Caco-2 (cell line): ENCODE measurements at regions of chr1 and their contacts with region 1.

Region 1: GRCh38 chr1:161177112-161177935 is at the start of gene B4GALT3:
- DNase-seq: peak; percentile 87 to 96
- H3K4me3 ChIP-seq: peak within 1 kb of the TSS; percentile 91
- H3K4me3 Mint-ChIP-seq: peak within 1 kb of the TSS; percentile 85
- H3K27ac Mint-ChIP-seq: peak within 1 kb of the TSS; percentile 96
- H3K4me1 ChIP-seq: peaks cover 4% of the 10 kb centered on the region
- H3K4me1 Mint-ChIP-seq: peaks cover 14% of the 10 kb centered on the region
- H3K27me3 ChIP-seq: no peaks in the 10 kb centered on the region
- H3K27me3 Mint-ChIP-seq: no peaks in the 10 kb centered on the region
- CTCF ChIP-seq: peak; percentile 44 to 54
- total RNA-seq, gene B4GALT3: 39.6 and 48.1 TPM in 2 replicates

Region 2: GRCh38 chr1:161098210-161099068 is 78.9 kb before region 1 on chr1 and contains the start of gene KLHDC9:
- CTCF ChIA-PET with region 1: no interaction called
- POLR2A ChIA-PET with region 1: no interaction called
- intact Hi-C with region 1: no loop called
- DNase-seq: peak; percentile 88 to 92
- H3K4me3 ChIP-seq: peak within 1 kb of the TSS; percentile 60
- H3K4me3 Mint-ChIP-seq: peak within 1 kb of the TSS; percentile 70
- H3K27ac Mint-ChIP-seq: peak within 1 kb of the TSS; percentile 82
- H3K4me1 ChIP-seq: no peaks in the 10 kb centered on the region
- H3K4me1 Mint-ChIP-seq: peaks cover 16% of the 10 kb centered on the region
- H3K27me3 ChIP-seq: no peaks in the 10 kb centered on the region
- H3K27me3 Mint-ChIP-seq: no peaks in the 10 kb centered on the region
- CTCF ChIP-seq: peak in 1 of 2 experiments; percentile 26
- total RNA-seq, gene KLHDC9: 2.0 and 2.2 TPM in 2 replicates

Region 3: GRCh38 chr1:161117759-161118581 is 59.4 kb before region 1 on chr1 and contains the starts of genes NIT1 and PFDN2:
- CTCF ChIA-PET with region 1: no interaction called
- POLR2A ChIA-PET with region 1: no interaction called
- intact Hi-C with region 1: loop called (anchors 5 kb)
- DNase-seq: peak; percentile 91 to 92
- H3K4me3 ChIP-seq: peak within 1 kb of the TSS; percentile 91
- H3K4me3 Mint-ChIP-seq: peak within 1 kb of the TSS; percentile 99
- H3K27ac Mint-ChIP-seq: peak within 1 kb of the TSS; percentile 96
- H3K4me1 ChIP-seq: peaks cover 17% of the 10 kb centered on the region
- H3K4me1 Mint-ChIP-seq: peaks cover 13% of the 10 kb centered on the region
- H3K27me3 ChIP-seq: no peaks in the 10 kb centered on the region
- H3K27me3 Mint-ChIP-seq: no peaks in the 10 kb centered on the region
- CTCF ChIP-seq: no peak
- total RNA-seq, gene NIT1: 41.8 and 42.1 TPM in 2 replicates
- total RNA-seq, gene PFDN2: 80.0 and 88.0 TPM in 2 replicates

Region 4: DNA sequence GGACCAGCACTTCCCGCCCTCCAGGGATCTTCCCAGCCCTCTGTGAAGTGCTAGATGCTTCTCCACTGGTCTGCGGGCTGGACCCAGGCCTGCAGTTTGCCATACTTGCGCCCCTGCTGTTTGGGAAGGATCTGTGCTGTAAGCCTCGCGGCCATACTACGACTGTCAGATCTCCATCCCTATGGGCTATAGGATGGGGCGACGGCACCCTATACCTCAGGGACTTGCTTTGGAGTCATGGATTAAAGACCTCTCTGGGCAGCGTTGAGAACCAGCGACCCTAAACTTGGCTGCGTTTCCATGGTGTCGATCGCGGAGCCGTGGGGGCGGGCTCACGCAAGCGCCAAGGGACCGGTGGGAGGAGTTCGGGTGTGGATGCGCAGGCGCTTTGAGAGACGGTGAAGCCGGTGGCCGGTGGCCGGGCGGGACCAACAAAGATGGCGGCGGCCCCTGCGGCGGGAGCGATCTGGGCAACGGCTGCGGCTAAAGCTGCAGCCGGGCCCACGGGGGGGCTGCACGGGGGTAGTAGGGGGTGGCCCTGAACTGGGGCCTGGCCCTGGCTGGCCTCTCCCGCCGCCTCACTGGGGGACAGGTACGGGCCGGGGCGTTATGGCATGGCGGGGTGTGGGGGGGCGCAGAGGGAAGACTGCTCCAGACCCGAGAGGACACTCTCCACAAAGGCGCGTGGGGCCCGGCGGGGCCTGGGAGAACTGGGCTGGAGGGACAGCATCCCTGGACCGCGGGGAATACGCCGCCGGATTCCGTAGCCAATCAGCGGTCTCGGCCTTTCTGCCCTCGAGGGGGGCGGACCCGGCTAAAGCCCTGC is 18.0 kb before region 1 on chr1 and contains the start of gene USP21:
- CTCF ChIA-PET with region 1: no interaction called
- POLR2A ChIA-PET with region 1: interaction called, 14 read pairs
- intact Hi-C with region 1: no loop called
- DNase-seq: peak; percentile 91 to 94
- H3K4me3 ChIP-seq: peak within 1 kb of the TSS; percentile 83
- H3K4me3 Mint-ChIP-seq: peak within 1 kb of the TSS; percentile 82
- H3K27ac Mint-ChIP-seq: peak within 1 kb of the TSS; percentile 81
- H3K4me1 ChIP-seq: peaks cover 10% of the 10 kb centered on the region; the same call in 1 of the 2 replicates
- H3K4me1 Mint-ChIP-seq: peaks cover 12% of the 10 kb centered on the region
- H3K27me3 ChIP-seq: no peaks in the 10 kb centered on the region
- H3K27me3 Mint-ChIP-seq: no peaks in the 10 kb centered on the region
- CTCF ChIP-seq: peak in 1 of 2 experiments; percentile 27
- total RNA-seq, gene USP21: 38.2 and 39.8 TPM in 2 replicates

Region 5: DNA sequence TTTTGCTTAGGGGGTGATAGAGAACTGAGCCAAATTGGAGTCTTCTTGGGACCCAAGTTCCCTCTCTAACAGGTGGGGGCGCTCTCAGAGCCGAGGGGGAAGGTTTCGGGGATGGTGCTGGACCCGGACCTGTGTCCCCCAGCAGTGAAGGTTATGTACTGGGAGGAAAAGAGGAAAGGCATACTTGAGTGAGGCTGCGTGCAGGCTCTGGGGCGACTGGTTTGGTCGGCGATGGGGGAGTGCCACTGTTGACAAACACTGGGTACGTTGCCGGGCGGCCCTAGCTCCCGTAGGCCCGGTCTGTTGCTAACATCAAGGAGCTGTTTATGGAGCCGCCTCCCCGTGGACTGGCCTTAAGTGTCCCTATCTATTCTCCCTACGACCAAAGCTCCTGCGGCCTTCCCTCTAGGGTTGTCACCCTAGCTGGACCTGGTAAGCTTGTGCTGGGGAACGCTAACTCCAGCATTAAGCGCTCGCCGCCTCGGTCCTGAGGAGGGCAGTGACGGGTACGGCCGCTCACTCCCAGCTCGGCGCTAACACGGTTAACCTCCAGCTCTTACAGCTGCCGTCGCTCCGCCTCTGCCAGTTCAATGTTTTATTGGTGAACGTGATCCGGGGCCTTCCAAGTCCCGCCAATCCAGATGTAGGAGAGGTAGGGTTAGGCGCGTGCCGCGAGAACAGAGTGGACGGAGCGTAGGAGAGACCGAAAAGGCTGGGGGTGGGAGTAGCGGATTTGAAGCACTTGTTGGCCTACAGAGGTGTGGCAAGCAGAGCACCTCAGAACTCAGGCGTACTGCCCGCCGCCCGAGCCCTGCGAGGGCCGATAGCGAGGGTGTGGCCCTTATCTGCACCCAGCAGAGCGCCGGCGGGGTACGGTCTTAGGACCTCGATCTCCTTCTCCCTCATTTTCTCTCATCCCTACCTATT is 11.3 kb before region 1 on chr1 and contains the start of gene PPOX:
- CTCF ChIA-PET with region 1: interaction called, 22 read pairs
- POLR2A ChIA-PET with region 1: interaction called, 25 read pairs
- intact Hi-C with region 1: no loop called
- DNase-seq: peak; percentile 96 to 98
- H3K4me3 ChIP-seq: peak within 1 kb of the TSS; percentile 88
- H3K4me3 Mint-ChIP-seq: peak within 1 kb of the TSS; percentile 83
- H3K27ac Mint-ChIP-seq: peak within 1 kb of the TSS; percentile 81
- H3K4me1 ChIP-seq: peaks cover 3% of the 10 kb centered on the region; the same call in 1 of the 2 replicates
- H3K4me1 Mint-ChIP-seq: no peaks in the 10 kb centered on the region
- H3K27me3 ChIP-seq: no peaks in the 10 kb centered on the region
- H3K27me3 Mint-ChIP-seq: no peaks in the 10 kb centered on the region
- CTCF ChIP-seq: peak in 1 of 2 experiments; percentile 55
- total RNA-seq, gene PPOX: 25.0 and 25.4 TPM in 2 replicates

Region 6: GRCh38 chr1:161287482-161288054 is 110.2 kb after region 1 on chr1:
- CTCF ChIA-PET with region 1: no interaction called
- POLR2A ChIA-PET with region 1: no interaction called
- intact Hi-C with region 1: no loop called
- DNase-seq: peak in 1 of 2 experiments; percentile 27
- H3K4me3 ChIP-seq: no peak overlapping the region
- H3K4me3 Mint-ChIP-seq: no peak overlapping the region
- H3K27ac Mint-ChIP-seq: no peak overlapping the region
- H3K4me1 ChIP-seq: peaks cover 20% of the 10 kb centered on the region
- H3K4me1 Mint-ChIP-seq: peaks cover 22% of the 10 kb centered on the region
- H3K27me3 ChIP-seq: no peaks in the 10 kb centered on the region
- H3K27me3 Mint-ChIP-seq: no peaks in the 10 kb centered on the region
- CTCF ChIP-seq: no peak

Region 7: DNA sequence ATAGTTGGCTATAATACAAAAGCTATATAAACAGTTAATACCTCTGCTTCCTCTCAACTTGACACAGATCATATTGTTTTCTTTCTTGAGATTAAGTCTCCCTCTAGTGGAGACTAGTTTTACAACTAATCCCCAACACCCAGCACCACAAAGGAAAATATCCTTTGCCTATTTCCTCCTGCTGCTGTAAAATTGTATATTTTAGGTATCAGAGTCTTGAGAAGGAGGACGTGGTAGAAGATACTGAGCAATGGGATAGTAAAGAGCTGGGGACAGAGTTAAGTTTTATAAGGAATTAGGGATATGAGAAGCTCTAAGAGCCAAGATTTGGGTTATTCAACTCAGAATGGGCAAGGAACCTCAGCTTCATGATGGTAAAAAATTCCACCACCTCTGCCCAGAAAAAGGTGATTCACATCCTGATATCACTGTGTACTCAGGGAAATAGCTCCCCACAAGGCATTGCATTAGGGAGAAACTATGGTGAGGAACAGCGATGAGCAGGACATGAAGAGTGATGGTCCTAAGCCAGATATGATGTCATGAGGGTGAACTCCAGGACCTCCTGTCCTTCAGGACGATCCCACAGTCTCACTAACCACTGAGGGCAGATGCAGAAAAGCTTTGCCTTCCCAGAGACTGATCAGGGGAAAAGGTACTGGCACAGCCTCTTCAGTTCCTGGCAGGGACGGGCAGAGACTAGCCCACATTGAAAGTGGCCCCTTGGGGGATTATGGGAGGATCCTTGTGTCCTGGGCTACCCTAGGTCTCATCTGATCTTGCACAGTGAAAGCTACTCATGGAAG is 205.1 kb after region 1 on chr1:
- CTCF ChIA-PET with region 1: no interaction called
- POLR2A ChIA-PET with region 1: no interaction called
- intact Hi-C with region 1: loop called (anchors 1 kb)
- DNase-seq: peak in 1 of 2 experiments; percentile 45
- H3K4me3 ChIP-seq: no peak overlapping the region
- H3K4me3 Mint-ChIP-seq: no peak overlapping the region
- H3K27ac Mint-ChIP-seq: no peak overlapping the region
- H3K4me1 ChIP-seq: peaks cover 8% of the 10 kb centered on the region; the same call in 1 of the 2 replicates
- H3K4me1 Mint-ChIP-seq: no peaks in the 10 kb centered on the region
- H3K27me3 ChIP-seq: no peaks in the 10 kb centered on the region
- H3K27me3 Mint-ChIP-seq: no peaks in the 10 kb centered on the region
- CTCF ChIP-seq: peak; percentile 43 to 54